ENCODE measurements at regions of chr6 and their contacts with region 1.

Region 1: DNA sequence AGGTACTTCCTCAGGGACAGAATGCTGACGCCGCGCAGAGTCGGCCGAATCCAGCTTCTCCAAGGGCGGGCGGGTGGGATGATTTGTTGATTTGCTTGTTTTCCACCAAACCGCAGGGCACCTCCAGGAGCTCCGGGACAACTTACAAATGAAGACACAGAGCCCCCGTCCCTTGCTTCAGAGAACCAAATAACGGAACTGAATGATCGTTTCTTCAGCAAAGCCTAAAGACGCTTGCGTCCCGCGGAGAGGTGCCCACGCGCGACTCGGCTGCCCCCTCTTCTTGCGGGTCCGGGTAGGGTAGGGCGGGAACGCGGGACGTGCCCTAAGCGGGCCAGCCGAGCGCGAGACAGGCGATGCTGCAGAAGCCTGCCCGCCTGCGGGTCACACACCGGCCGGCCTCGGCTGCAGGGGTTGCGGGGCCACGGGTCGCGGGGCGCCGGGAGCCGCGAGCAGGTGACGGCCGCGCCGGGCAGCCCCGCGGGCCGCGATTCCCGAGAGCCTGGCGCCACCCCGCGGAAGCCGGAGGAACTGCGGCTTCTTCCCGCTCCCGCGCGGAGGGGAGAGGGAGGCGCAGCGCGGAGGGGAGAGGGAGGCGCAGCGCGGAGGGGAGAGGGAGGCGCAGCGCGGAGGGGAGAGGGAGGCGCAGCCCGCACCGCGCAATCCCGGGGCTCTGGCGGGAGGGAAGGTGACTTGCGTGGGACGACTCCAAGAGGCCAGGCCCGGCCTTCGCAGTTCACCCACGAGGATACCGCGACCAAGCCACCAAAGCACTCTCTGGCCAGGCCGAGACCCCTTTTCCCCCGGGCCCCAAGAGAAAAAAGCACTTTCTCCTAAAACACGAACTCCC is 7.7 kb upstream of the FOXF2 start:
- DNase-seq: peak; percentile 41
- H3K4me3 Mint-ChIP-seq: no peak overlapping the region
- H3K27ac Mint-ChIP-seq: no peak overlapping the region
- H3K4me1 Mint-ChIP-seq: peaks cover 20% of the 10 kb centered on the region
- H3K27me3 Mint-ChIP-seq: peaks cover 67% of the 10 kb centered on the region

Region 2: DNA sequence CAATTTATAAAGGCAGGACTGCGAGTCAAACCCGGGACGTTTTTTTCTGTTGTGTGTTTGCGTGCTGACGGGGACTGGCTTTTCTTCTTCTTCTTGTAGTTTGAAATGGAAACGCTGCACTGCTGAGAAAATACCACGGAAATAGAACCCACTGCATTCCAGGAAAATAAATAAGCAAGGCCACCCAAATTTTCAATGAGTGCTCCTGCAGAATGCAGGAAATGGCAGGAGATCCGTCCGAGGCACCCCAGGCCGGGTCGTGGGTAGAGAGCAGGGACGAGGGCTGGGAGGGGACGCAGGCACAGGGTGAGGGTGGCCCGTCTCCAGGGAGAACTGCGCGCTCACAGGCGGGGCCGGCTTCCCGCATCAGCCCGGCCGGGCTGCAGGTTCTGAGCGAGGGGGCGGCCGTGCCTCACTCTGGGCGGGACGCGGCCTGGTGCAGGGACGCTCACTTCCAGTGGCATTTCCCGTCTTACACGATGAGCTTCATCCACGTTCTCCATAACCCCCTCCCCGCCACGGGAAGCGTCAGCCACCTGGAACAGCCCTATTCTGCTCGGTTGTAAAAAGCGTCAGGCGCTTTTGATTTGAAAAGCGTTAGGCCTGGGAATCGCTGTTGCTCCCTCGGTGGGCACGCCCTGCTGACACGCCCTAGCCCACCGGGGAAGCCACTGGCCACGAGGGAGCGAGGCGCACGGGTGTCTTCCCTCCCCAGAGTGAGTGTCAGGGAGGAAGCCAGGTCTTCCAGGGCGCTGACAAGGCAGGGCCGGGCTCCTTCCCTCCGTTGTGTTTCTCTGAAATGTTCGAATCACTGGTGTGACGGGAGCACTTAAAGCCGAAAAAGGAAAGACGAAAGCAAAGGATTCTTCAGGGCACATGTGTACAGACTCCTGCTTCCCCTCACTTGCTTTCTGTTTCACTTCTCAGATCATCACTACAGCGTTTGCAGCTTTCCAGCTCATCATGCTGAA is 670.8 kb before region 1 on chr6:
- intact Hi-C with region 1: loop called (anchors 5 kb)
- DNase-seq: peak; percentile 64
- H3K4me3 Mint-ChIP-seq: peak overlapping the region; percentile 95
- H3K27ac Mint-ChIP-seq: peak overlapping the region; percentile 99
- H3K4me1 Mint-ChIP-seq: peaks cover 44% of the 10 kb centered on the region
- H3K27me3 Mint-ChIP-seq: no peaks in the 10 kb centered on the region

Region 3: GRCh38 chr6:797479-798077 is 584.1 kb before region 1 on chr6:
- intact Hi-C with region 1: loop called (anchors 1 kb)
- DNase-seq: no peak
- H3K4me3 Mint-ChIP-seq: no peak overlapping the region
- H3K27ac Mint-ChIP-seq: no peak overlapping the region
- H3K4me1 Mint-ChIP-seq: no peaks in the 10 kb centered on the region
- H3K27me3 Mint-ChIP-seq: peaks cover 48% of the 10 kb centered on the region

Region 4: DNA sequence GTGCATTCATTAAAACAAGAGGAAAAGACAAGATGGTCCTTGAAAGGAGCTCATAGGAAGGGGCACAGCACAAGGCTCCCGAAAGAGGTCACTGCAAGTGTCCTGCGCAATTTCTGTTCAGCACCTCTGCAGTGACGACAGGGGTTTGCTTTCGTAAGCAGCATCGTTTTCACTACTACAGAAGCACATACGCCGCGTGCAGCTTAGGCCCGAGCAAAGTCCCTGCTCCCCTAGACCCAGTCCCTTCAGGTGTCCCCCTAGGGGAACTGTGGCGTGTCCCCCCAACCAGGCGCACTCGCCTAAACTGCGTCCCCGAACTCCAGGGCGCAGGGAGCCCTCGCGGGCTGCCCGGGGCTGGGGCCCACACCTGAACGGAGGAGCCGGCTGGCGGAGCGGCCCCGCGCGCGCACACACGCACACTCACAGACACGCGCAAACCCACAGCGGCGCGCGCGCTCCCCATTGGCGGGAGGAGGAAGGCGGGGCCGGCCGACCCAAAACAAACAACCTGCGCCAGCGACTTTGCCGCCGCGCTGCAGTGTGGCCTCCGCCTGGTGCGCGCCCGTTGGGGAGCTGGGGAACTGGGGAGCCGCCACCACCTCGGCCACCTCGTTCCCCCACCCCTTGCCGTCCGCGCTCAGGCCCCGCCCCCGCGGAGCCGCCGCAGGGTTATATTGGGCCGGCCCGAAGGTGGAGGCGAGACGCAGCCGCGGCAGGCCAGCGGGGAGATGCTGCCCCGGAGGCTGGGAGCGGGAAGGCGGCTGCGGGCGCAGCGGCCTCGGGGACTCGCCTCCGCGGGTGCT is 70.1 kb before region 1 on chr6 and contains the start of gene FOXQ1:
- intact Hi-C with region 1: loop called (anchors 2 kb)
- DNase-seq: no peak
- H3K4me3 Mint-ChIP-seq: peak within 1 kb of the TSS; percentile 53
- H3K27ac Mint-ChIP-seq: peak within 1 kb of the TSS; percentile 84
- H3K4me1 Mint-ChIP-seq: peaks cover 28% of the 10 kb centered on the region
- H3K27me3 Mint-ChIP-seq: peaks cover 69% of the 10 kb centered on the region
- total RNA-seq, gene FOXQ1: not detected in 2 replicates

Region 5: DNA sequence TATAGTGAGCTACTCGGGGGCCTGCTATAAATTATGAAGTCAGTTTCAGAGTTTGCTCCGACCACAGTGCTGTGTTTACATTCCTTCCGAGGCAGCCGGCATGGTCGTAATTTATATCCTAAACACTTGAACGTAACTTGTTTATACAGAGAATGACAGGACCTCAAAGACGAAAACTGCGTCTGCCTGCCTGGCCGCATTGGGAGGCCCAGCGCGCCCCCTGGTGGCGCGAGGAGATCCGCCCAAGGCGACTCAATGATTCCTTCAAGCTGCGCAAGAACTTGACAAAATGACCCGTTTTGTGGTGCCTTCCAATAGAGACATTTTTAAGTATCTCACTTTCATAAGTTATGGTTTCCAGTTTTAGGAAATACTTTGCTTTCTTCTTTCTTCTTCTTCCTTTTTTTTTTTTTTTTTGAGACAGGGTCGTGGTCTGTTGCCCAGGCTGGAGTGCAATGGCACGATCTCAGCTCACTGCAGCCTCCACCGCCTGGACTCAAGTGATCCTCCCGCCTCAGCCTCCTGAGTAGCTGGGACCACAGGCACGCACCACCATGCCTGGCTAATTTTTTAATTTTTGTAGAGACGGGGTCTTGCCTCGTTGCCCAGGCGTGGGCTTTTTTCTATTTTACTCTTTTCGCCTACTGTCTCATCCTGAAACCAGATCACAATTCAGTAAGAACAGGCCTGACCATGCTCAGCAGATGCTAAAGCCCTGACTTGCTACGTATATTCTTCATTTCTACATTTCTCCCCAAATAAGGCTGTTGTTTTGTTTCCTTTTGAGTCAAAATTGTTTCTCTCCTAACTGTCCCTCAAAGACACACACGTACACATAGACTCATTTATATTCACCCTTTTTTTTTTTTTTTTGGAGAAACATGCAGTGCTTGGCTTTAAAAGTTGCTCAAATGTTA is 15.5 kb after region 1 on chr6:
- intact Hi-C with region 1: loop called (anchors 2 kb)
- DNase-seq: peak; percentile 42
- H3K4me3 Mint-ChIP-seq: no peak overlapping the region
- H3K27ac Mint-ChIP-seq: no peak overlapping the region
- H3K4me1 Mint-ChIP-seq: peaks cover 5% of the 10 kb centered on the region
- H3K27me3 Mint-ChIP-seq: peaks cover 53% of the 10 kb centered on the region

Region 6: DNA sequence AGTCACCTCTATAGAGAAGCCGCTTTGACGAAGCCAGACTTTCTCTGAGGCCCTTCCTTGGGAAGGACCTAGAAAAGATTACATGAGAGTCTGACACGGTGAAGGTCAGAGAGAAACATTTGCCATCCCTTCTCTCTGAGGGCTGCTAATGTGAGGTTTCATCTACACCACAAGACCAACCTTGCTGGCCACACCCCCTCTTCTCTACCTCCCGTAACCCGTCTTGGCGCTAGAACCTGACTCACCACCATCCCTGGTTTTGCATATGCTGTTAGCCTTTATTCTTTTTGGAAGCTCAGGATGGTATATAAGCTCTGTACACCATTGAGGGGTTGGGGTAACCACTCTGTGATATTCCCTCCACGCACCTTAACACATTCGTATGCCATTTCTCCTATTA is 71.3 kb after region 1 on chr6:
- intact Hi-C with region 1: no loop called
- DNase-seq: no peak
- H3K4me3 Mint-ChIP-seq: no peak overlapping the region
- H3K27ac Mint-ChIP-seq: no peak overlapping the region
- H3K4me1 Mint-ChIP-seq: no peaks in the 10 kb centered on the region
- H3K27me3 Mint-ChIP-seq: peaks cover 12% of the 10 kb centered on the region

Region 7: GRCh38 chr6:3231247-3232016 is 1849.7 kb after region 1 on chr6:
- intact Hi-C with region 1: loop called (anchors 5 kb)
- DNase-seq: no peak
- H3K4me3 Mint-ChIP-seq: no peak overlapping the region
- H3K27ac Mint-ChIP-seq: peak overlapping the region; percentile 3
- H3K4me1 Mint-ChIP-seq: peaks cover 42% of the 10 kb centered on the region
- H3K27me3 Mint-ChIP-seq: peaks cover 76% of the 10 kb centered on the region